ENCODE measurements at regions of chr14 and their contacts with region 1.

Region 1: GRCh38 chr14:22653012-22653621 is 9.0 kb upstream of the OR6J1 start:
- DNase-seq: peak; percentile 62 to 84
- H3K4me3 ChIP-seq: no peak overlapping the region
- H3K27ac ChIP-seq: no peak overlapping the region
- H3K4me1 ChIP-seq: no peaks in the 10 kb centered on the region
- H3K27me3 ChIP-seq: 0 out of 7 replicates have a peak, but pooled peaks cover 0 to 2% (median 0%) of the 10 kb centered on the region in 4 experiments
- CTCF ChIP-seq: peak; percentile 87 to 94 (median 89)
- EP300 ChIP-seq: no peak
- POLR2A ChIP-seq: no peak
- RAD21 ChIP-seq: peak; percentile 87

Region 2: GRCh38 chr14:22598099-22598899 is 54.8 kb before region 1 on chr14 and contains the start of gene ABHD4:
- CTCF ChIA-PET with region 1: interaction called, 29 read pairs
- POLR2A ChIA-PET with region 1: interaction called, 7 read pairs
- DNase-seq: peak in 1 of 2 experiments; percentile 92
- H3K4me3 ChIP-seq: peak within 1 kb of the TSS; percentile 68 to 99 (median 84)
- H3K27ac ChIP-seq: peak within 1 kb of the TSS; percentile 77
- H3K4me1 ChIP-seq: peaks cover 0 to 10% (median 6%) of the 10 kb centered on the region in 4 experiments; a peak in 4 of 7 replicates
- H3K27me3 ChIP-seq: no peaks in the 10 kb centered on the region
- CTCF ChIP-seq: no peak
- EP300 ChIP-seq: 0 out of 3 replicates have a peak, but pooled peaks of 1 of the 2 experiments have one; percentile 31
- POLR2A ChIP-seq: peak; percentile 60 to 78; a peak in 2 of 3 replicates
- RAD21 ChIP-seq: no peak
- total RNA-seq, gene ABHD4: 32.4 and 37.1 TPM in 2 replicates

Region 3: GRCh38 chr14:22668417-22668816 is 15.3 kb after region 1 on chr14:
- CTCF ChIA-PET with region 1: interaction called, 14 read pairs
- POLR2A ChIA-PET with region 1: no interaction called
- DNase-seq: no peak
- H3K4me3 ChIP-seq: no peak overlapping the region
- H3K27ac ChIP-seq: no peak overlapping the region
- H3K4me1 ChIP-seq: no peaks in the 10 kb centered on the region
- H3K27me3 ChIP-seq: no peaks in the 10 kb centered on the region
- CTCF ChIP-seq: no peak
- EP300 ChIP-seq: no peak
- POLR2A ChIP-seq: no peak
- RAD21 ChIP-seq: no peak

Measured in H1 (cell line).